Panc1 (cell line): ENCODE measurements at regions of chr2 and their contacts with region 1.

Region 1: DNA sequence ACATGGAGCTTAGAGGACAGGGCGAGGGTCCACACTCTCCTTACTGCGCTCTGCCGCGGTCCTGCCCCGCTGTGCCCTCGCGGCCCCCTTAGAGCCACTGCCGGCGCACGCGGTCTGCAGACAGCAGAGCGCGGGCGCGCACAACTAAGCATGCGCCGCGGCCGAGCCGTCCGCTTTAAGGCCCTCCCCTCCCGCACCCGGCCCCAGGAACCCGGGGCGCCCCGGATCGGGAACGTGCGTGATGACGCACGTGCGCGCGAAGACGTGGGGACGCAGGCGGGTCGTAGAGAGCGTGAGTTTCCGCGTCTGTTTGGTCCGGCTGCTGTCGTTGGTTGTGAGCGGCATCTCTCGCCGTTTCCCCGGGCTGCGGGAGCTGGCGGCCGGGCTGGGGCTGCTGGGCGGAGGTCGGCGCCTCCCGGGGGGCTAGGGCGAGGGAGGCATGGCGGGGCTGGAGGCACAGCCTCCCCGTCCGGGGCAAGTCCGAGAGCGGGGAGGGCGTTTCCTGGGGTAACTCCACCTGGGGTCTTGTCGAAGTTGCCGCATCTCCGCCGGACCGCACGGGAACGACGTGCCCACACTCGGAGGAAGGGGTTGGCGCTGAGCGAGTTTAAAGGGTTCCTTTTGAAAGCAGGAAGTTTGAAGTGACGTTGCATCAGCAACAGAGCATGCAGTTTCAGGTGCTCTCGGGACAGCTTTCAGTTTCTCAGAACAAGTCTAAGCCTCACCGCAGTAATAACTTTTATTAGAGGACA is at the start of gene RHBDD1:
- DNase-seq: peak; percentile 78
- ATAC-seq: peak; percentile 97
- H3K4me3 ChIP-seq: peak within 1 kb of the TSS; percentile 80 to 82
- H3K27ac ChIP-seq: peak within 1 kb of the TSS; percentile 94
- H3K4me1 ChIP-seq: peaks cover 20% of the 10 kb centered on the region
- H3K27me3 ChIP-seq: no peaks in the 10 kb centered on the region
- CTCF ChIP-seq: no peak
- total RNA-seq, gene RHBDD1: 25.3 TPM

Region 2: GRCh38 chr2:226969417-226970080 is 133.6 kb after region 1 on chr2:
- CTCF ChIA-PET with region 1: no interaction called
- POLR2A ChIA-PET with region 1: interaction called, 13 read pairs
- in situ Hi-C with region 1: no loop called
- intact Hi-C with region 1: no loop called
- DNase-seq: no peak
- ATAC-seq: no peak
- H3K4me3 ChIP-seq: no peak overlapping the region
- H3K27ac ChIP-seq: no peak overlapping the region
- H3K4me1 ChIP-seq: no peaks in the 10 kb centered on the region
- H3K27me3 ChIP-seq: no peaks in the 10 kb centered on the region
- CTCF ChIP-seq: no peak